ENCODE measurements at regions of chr2 and their contacts with region 1.

Region 1: GRCh38 chr2:84881581-84882414 is 914 bp upstream of the TRABD2A start:
- DNase-seq: peak; percentile 82 to 86 (median 85)
- H3K4me3 ChIP-seq: peak overlapping the region; percentile 67 to 93
- H3K4me3 Mint-ChIP-seq: peak overlapping the region; percentile 90 to 99 (median 96)
- H3K27ac ChIP-seq: peak overlapping the region; percentile 72
- H3K27ac Mint-ChIP-seq: peak overlapping the region; percentile 84 to 98 (median 97)
- H3K4me1 ChIP-seq: peaks cover 32% of the 10 kb centered on the region
- H3K4me1 Mint-ChIP-seq: peaks cover 25 to 60% (median 42%) of the 10 kb centered on the region in 4 donors
- H3K27me3 ChIP-seq: no peaks in the 10 kb centered on the region
- H3K27me3 Mint-ChIP-seq: no peaks in the 10 kb centered on the region

Region 2: GRCh38 chr2:84409531-84409930 is 472.3 kb before region 1 on chr2:
- CTCF ChIA-PET with region 1: no interaction called
- POLR2A ChIA-PET with region 1: no interaction called
- intact Hi-C with region 1: no loop called
- DNase-seq: no peak
- H3K4me3 ChIP-seq: no peak overlapping the region
- H3K4me3 Mint-ChIP-seq: no peak overlapping the region
- H3K27ac ChIP-seq: no peak overlapping the region
- H3K27ac Mint-ChIP-seq: no peak overlapping the region
- H3K4me1 ChIP-seq: no peaks in the 10 kb centered on the region
- H3K4me1 Mint-ChIP-seq: no peaks in the 10 kb centered on the region
- H3K27me3 ChIP-seq: no peaks in the 10 kb centered on the region
- H3K27me3 Mint-ChIP-seq: peaks cover 4 to 5% of the 10 kb centered on the region in 2 donors

Region 3: DNA sequence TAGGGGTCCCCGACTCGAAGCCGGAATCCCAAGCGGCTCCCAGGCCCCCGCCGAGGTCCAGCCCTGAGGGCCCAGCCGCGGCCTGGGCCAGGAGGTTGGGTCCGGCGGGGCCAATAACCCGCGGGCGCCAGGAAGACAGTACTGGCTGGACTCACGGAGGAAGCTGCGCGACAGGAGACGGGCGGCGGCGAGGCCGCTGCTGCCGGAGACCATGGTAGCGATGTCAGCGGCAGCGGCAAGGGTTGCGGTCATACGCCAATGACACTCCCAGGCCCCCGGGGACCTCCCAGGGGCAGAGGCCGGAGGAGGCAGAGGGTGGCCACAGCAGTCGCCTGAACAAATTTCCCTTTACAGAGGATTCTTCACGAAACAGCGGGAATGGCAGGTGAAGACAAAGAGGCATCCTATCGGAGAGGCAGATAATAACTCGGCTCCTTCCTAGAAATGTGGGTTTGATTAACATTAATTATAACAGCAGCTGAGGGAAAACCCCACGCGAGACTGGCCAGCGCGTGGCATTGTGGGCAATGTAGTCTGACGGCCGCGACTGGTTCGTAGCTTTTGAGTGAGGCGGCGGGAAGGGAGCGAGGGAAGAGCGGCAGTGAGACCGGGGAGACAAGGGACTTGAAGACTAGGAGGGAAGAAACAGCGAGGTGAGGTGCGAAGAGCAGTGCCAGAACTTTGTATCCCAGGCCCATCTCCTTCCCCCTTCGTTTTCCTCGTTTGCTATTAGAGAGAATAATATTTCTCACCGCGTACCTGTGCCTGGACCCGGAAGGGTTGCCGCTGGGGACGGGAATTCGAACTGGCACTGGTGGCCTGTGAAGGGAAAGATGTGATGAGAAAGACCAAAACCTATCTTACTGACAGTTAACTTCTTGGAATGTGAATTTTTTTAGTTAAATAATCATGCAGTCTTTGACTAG is 422.5 kb before region 1 on chr2 and contains the start of gene SUCLG1:
- CTCF ChIA-PET with region 1: interaction called, 3 read pairs
- POLR2A ChIA-PET with region 1: interaction called, 3 read pairs
- intact Hi-C with region 1: loop called (anchors 1 kb)
- DNase-seq: peak; percentile 89 to 92 (median 90)
- H3K4me3 ChIP-seq: peak within 1 kb of the TSS; percentile 68 to 76
- H3K4me3 Mint-ChIP-seq: peak within 1 kb of the TSS; percentile 90 to 99 (median 91)
- H3K27ac ChIP-seq: peak within 1 kb of the TSS; percentile 77
- H3K27ac Mint-ChIP-seq: peak within 1 kb of the TSS; percentile 89 to 99 (median 98)
- H3K4me1 ChIP-seq: peaks cover 39% of the 10 kb centered on the region
- H3K4me1 Mint-ChIP-seq: peaks cover 36 to 49% (median 43%) of the 10 kb centered on the region in 4 donors
- H3K27me3 ChIP-seq: no peaks in the 10 kb centered on the region
- H3K27me3 Mint-ChIP-seq: no peaks in the 10 kb centered on the region
- total RNA-seq, gene SUCLG1: 46.5 to 46.6 TPM

Region 4: GRCh38 chr2:84526562-84526961 is 355.2 kb before region 1 on chr2:
- CTCF ChIA-PET with region 1: interaction called, 7 read pairs
- POLR2A ChIA-PET with region 1: interaction called, 4 read pairs
- intact Hi-C with region 1: loop called (anchors 1 kb)
- DNase-seq: peak in 1 of 5 donors; percentile 12
- H3K4me3 ChIP-seq: no peak overlapping the region
- H3K4me3 Mint-ChIP-seq: peak overlapping the region in 1 of 8 donors; percentile 2
- H3K27ac ChIP-seq: no peak overlapping the region
- H3K27ac Mint-ChIP-seq: peak overlapping the region in 3 of 7 donors; percentile 12 to 55 (median 22)
- H3K4me1 ChIP-seq: peaks cover 10% of the 10 kb centered on the region
- H3K4me1 Mint-ChIP-seq: peaks cover 2 to 24% (median 13%) of the 10 kb centered on the region in 4 donors
- H3K27me3 ChIP-seq: no peaks in the 10 kb centered on the region
- H3K27me3 Mint-ChIP-seq: no peaks in the 10 kb centered on the region

Region 5: DNA sequence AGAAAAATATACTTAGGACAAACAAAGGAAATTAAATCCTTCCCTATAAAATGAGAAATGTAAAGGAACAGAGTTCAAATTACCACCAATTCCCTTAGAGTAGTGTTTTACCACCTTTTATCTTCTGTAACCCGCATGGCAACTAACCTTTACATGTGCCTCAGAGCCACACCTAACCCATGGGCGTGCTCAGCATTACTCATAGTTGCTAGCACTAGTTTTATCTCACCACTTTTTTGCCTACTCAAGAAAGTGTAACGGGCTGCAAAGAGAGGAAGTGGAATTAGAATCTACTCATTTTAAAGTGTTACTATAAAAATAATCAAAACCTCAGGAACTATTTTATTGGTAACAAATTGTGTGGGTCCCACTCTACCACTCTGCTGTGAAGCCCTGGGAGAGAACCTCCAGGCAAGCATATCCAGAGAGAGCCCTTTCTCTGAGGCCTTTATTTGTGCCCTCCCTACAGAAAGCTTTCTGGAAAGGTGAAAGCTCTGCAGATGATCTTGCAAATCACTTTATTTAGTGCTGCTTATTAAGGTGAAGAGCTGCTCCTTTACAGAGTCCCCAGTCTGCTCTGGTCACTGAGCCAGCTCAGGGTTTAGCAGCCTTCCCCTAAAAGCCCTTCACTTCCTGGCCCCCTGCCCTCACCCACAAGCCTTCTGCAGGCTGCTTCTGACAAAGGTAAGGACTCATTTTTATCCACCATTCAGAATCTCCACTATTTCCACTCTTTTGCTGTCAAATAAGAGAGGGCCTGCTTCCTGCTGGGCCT is 99.7 kb before region 1 on chr2:
- CTCF ChIA-PET with region 1: interaction called, 3 read pairs
- POLR2A ChIA-PET with region 1: interaction called, 18 read pairs
- intact Hi-C with region 1: no loop called
- DNase-seq: peak; percentile 59 to 84 (median 71)
- H3K4me3 ChIP-seq: peak overlapping the region; percentile 6 to 23
- H3K4me3 Mint-ChIP-seq: peak overlapping the region; percentile 52 to 84 (median 74)
- H3K27ac ChIP-seq: peak overlapping the region; percentile 53
- H3K27ac Mint-ChIP-seq: peak overlapping the region; percentile 84 to 96 (median 93)
- H3K4me1 ChIP-seq: peaks cover 80% of the 10 kb centered on the region
- H3K4me1 Mint-ChIP-seq: peaks cover 80 to 93% (median 84%) of the 10 kb centered on the region in 4 donors
- H3K27me3 ChIP-seq: no peaks in the 10 kb centered on the region
- H3K27me3 Mint-ChIP-seq: no peaks in the 10 kb centered on the region

Region 6: GRCh38 chr2:84865181-84865783 is 16.5 kb before region 1 on chr2:
- CTCF ChIA-PET with region 1: interaction called, 29 read pairs
- POLR2A ChIA-PET with region 1: interaction called, 35 read pairs
- intact Hi-C with region 1: loop called (anchors 1 kb)
- DNase-seq: peak in 4 of 5 donors; percentile 52 to 64 (median 55)
- H3K4me3 ChIP-seq: no peak overlapping the region
- H3K4me3 Mint-ChIP-seq: peak overlapping the region; percentile 30 to 82 (median 63)
- H3K27ac ChIP-seq: no peak overlapping the region
- H3K27ac Mint-ChIP-seq: peak overlapping the region; percentile 72 to 95 (median 91)
- H3K4me1 ChIP-seq: peaks cover 80% of the 10 kb centered on the region
- H3K4me1 Mint-ChIP-seq: peaks cover 61 to 92% (median 74%) of the 10 kb centered on the region in 4 donors
- H3K27me3 ChIP-seq: no peaks in the 10 kb centered on the region
- H3K27me3 Mint-ChIP-seq: no peaks in the 10 kb centered on the region

Region 7: GRCh38 chr2:84905181-84906107 is 23.6 kb after region 1 on chr2 and contains the start of gene TMSB10:
- CTCF ChIA-PET with region 1: interaction called, 114 read pairs
- POLR2A ChIA-PET with region 1: interaction called, 204 read pairs
- intact Hi-C with region 1: loop called (anchors 1 kb)
- DNase-seq: peak; percentile 88 to 95 (median 92)
- H3K4me3 ChIP-seq: peak within 1 kb of the TSS; percentile 69 to 92
- H3K4me3 Mint-ChIP-seq: peak within 1 kb of the TSS; percentile 90 to 97 (median 96)
- H3K27ac ChIP-seq: peak within 1 kb of the TSS; percentile 71
- H3K27ac Mint-ChIP-seq: peak within 1 kb of the TSS; percentile 90 to 97 (median 95)
- H3K4me1 ChIP-seq: peaks cover 34% of the 10 kb centered on the region
- H3K4me1 Mint-ChIP-seq: peaks cover 46 to 74% (median 52%) of the 10 kb centered on the region in 4 donors
- H3K27me3 ChIP-seq: no peaks in the 10 kb centered on the region
- H3K27me3 Mint-ChIP-seq: no peaks in the 10 kb centered on the region
- total RNA-seq, gene TMSB10: 1,218 to 1,245 TPM

Region 8: DNA sequence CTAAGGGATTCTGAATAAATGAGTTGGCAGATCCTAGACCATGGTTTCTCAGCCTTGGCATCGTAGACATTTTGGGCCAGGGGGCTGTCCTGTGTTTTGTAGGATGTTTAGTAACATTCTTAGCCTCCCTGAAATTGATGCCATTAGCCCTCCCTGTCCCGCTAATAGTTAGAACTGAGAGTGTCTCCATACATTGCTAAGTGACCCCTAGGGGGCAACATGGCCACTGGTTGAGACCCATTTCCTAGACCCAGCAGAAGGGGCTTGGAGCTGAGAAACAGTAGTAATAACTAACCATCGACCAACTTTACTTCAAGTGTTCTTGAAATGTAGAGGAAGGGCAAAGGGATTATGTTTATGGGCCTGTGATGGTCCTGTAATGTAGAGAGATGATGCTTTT is 129.9 kb after region 1 on chr2:
- CTCF ChIA-PET with region 1: no interaction called
- POLR2A ChIA-PET with region 1: no interaction called
- intact Hi-C with region 1: loop called (anchors 5 kb)
- DNase-seq: no peak
- H3K4me3 ChIP-seq: no peak overlapping the region
- H3K4me3 Mint-ChIP-seq: peak overlapping the region in 1 of 8 donors; percentile 3
- H3K27ac ChIP-seq: no peak overlapping the region
- H3K27ac Mint-ChIP-seq: peak overlapping the region in 6 of 7 donors; percentile 15 to 89 (median 70)
- H3K4me1 ChIP-seq: peaks cover 57% of the 10 kb centered on the region
- H3K4me1 Mint-ChIP-seq: peaks cover 57 to 84% (median 70%) of the 10 kb centered on the region in 4 donors
- H3K27me3 ChIP-seq: no peaks in the 10 kb centered on the region
- H3K27me3 Mint-ChIP-seq: no peaks in the 10 kb centered on the region

Measured in CD4-positive, alpha-beta memory T cell (primary cell).